Activated T-helper 1 cell treated with anti-CD3 and anti-CD28 coated beads, Interleukin-12 subunit alpha, Interleukin-12 subunit beta, Interleukin-2, Interleukin-4 antibody, amounts not matched to agents 30 ng/mL and 10 ng/mL and 1 ng/mL, durations not matched to agents 14 hours and 24 hours and 36 hours (primary cell): ENCODE measurements at regions of chr16 and their contacts with region 1.

Region 1: DNA sequence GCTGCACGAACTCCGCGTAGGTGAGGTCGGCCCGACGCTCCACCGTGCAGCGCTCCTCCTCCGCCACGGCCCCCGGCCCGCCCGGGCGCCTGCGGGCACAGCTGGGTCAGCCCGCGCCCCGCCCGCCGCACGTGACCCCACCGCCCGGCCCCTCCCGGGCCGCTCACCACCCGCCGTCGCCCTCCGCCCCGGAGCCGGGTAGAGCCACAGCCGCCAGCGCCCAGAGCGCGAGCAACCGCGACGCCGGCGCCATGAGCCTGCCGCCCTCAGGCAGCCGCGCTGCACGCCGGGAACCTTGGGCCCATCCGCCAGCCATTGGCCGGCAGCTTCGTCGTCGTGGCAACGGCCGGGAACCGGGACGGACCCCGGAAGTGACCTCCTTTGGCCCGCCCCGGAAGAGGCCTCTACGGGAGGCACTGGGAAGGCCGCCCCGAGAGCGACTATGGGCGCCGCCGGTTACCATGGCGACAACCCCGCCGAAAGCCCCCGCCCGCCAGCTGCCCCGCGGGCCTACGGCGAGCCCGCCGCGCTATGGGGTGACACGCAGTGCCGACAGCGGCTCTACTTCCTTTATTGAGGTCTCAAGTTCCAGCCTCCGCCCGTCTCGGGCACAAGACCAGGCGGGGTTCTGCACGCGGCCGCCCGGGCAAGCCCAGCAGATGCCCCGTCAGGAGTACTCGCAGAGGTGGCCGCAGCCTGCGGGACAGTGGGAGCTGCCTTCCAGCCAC is at the start of gene JMJD8:
- DNase-seq: peak; percentile 97
- H3K4me3 Mint-ChIP-seq: peak within 1 kb of the TSS; percentile 83
- H3K27ac Mint-ChIP-seq: peak within 1 kb of the TSS; percentile 58
- H3K4me1 Mint-ChIP-seq: peaks cover 5% of the 10 kb centered on the region
- H3K27me3 Mint-ChIP-seq: no peaks in the 10 kb centered on the region
- total RNA-seq, gene JMJD8: 63.4 and 71.4 TPM in 2 replicates

Region 2: GRCh38 chr16:648781-649589 is 35.2 kb before region 1 on chr16 and contains the start of gene WDR90:
- intact Hi-C with region 1: loop called (anchors 1 kb)
- DNase-seq: peak; percentile 92
- H3K4me3 Mint-ChIP-seq: peak within 1 kb of the TSS; percentile 84
- H3K27ac Mint-ChIP-seq: peak within 1 kb of the TSS; percentile 68
- H3K4me1 Mint-ChIP-seq: no peaks in the 10 kb centered on the region
- H3K27me3 Mint-ChIP-seq: no peaks in the 10 kb centered on the region
- total RNA-seq, gene WDR90: 81.2 and 82.3 TPM in 2 replicates

Region 3: GRCh38 chr16:667780-668518 is 16.3 kb before region 1 on chr16 and contains the start of gene RHOT2:
- intact Hi-C with region 1: loop called (anchors 1 kb)
- DNase-seq: peak; percentile 94
- H3K4me3 Mint-ChIP-seq: peak within 1 kb of the TSS; percentile 85
- H3K27ac Mint-ChIP-seq: peak within 1 kb of the TSS; percentile 86
- H3K4me1 Mint-ChIP-seq: peaks cover 4% of the 10 kb centered on the region
- H3K27me3 Mint-ChIP-seq: no peaks in the 10 kb centered on the region
- total RNA-seq, gene RHOT2: 165 and 177 TPM in 2 replicates